ENCODE measurements at regions of chr2 and their contacts with region 1.

Region 1: GRCh38 chr2:171939743-171940071 is 17.4 kb downstream of the HAT1 start:
- DNase-seq: no peak
- ATAC-seq: peak; percentile 64
- H3K4me3 ChIP-seq: no peak overlapping the region
- H3K4me3 Mint-ChIP-seq: no peak overlapping the region
- H3K27ac ChIP-seq: no peak overlapping the region
- H3K27ac Mint-ChIP-seq: no peak overlapping the region
- H3K4me1 ChIP-seq: no peaks in the 10 kb centered on the region
- H3K4me1 Mint-ChIP-seq: peaks cover 23 to 63% (median 38%) of the 10 kb centered on the region in 7 donors
- H3K27me3 ChIP-seq: no peaks in the 10 kb centered on the region
- H3K27me3 Mint-ChIP-seq: no peaks in the 10 kb centered on the region

Region 2: DNA sequence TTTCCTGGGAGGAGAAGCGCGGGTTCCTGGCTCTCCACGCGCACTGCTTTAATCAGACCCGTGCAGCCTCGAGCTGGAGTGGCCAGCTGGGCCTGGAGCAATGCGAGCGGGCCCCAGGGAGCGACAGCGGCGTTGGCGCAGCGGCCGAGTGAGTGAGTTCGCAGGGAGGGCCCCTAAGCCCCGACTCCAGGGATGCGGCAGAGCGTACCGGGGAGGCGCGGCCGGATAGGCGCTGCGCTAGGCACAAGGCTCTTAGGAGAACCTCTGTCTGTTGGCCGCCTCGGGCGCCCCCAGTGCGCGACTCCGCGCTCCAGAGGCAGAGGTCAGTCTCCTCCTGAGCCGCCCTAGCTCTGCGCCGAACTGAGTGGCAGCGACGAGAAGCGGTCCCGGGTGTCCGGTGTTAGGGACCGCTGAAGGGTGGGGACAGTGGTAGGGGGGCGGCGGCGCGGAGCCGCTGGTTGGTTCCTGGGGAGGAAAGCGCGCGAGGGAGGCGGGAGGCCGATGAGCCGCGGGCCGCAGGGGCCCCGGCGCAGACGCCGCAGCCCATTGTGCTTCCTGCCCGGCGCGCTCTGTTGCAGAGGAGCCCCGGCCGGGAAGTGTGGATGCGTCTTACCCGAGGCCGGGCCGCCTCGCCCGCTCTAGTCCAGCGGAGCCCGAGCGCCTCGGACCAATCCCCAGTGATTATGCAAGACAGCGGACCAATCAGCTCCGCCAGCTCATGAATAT is 145.2 kb after region 1 on chr2:
- CTCF ChIA-PET with region 1: no interaction called
- POLR2A ChIA-PET with region 1: no interaction called
- intact Hi-C with region 1: loop called in 1 of 2 experiments (anchors 5 kb)
- DNase-seq: peak in 5 of 9 donors; percentile 37 to 57 (median 52)
- ATAC-seq: peak; percentile 81
- H3K4me3 ChIP-seq: peak overlapping the region; percentile 15
- H3K4me3 Mint-ChIP-seq: peak overlapping the region; percentile 70 to 85 (median 78)
- H3K27ac ChIP-seq: no peak overlapping the region
- H3K27ac Mint-ChIP-seq: peak overlapping the region in 8 of 9 donors; percentile 14 to 91 (median 84)
- H3K4me1 ChIP-seq: peaks cover 50 to 51% of the 10 kb centered on the region in 2 donors
- H3K4me1 Mint-ChIP-seq: peaks cover 36 to 74% (median 58%) of the 10 kb centered on the region in 7 donors
- H3K27me3 ChIP-seq: peaks cover 81 to 96% of the 10 kb centered on the region in 2 donors
- H3K27me3 Mint-ChIP-seq: peaks cover 80 to 98% (median 88%) of the 10 kb centered on the region in 5 donors

Region 3: GRCh38 chr2:172350839-172351479 is 411.3 kb after region 1 on chr2:
- CTCF ChIA-PET with region 1: no interaction called
- POLR2A ChIA-PET with region 1: no interaction called
- intact Hi-C with region 1: no loop called
- DNase-seq: no peak
- ATAC-seq: no peak
- H3K4me3 ChIP-seq: no peak overlapping the region
- H3K4me3 Mint-ChIP-seq: no peak overlapping the region
- H3K27ac ChIP-seq: no peak overlapping the region
- H3K27ac Mint-ChIP-seq: no peak overlapping the region
- H3K4me1 ChIP-seq: no peaks in the 10 kb centered on the region
- H3K4me1 Mint-ChIP-seq: no peaks in the 10 kb centered on the region
- H3K27me3 ChIP-seq: no peaks in the 10 kb centered on the region
- H3K27me3 Mint-ChIP-seq: peaks cover 0 to 14% (median 0%) of the 10 kb centered on the region in 5 donors

Measured in naive thymus-derived CD4-positive, alpha-beta T cell (primary cell).